MCF 10A (cell line): ENCODE measurements at regions of chr6 and their contacts with region 1.

Region 1: GRCh38 chr6:19538077-19538512 is 299.1 kb upstream of the ID4 start:
- DNase-seq: peak; percentile 91
- H3K4me3 Mint-ChIP-seq: no peak overlapping the region
- H3K27ac Mint-ChIP-seq: no peak overlapping the region
- H3K4me1 Mint-ChIP-seq: peaks cover 17% of the 10 kb centered on the region
- H3K27me3 Mint-ChIP-seq: no peaks in the 10 kb centered on the region
- CTCF ChIP-seq: no peak

Region 2: DNA sequence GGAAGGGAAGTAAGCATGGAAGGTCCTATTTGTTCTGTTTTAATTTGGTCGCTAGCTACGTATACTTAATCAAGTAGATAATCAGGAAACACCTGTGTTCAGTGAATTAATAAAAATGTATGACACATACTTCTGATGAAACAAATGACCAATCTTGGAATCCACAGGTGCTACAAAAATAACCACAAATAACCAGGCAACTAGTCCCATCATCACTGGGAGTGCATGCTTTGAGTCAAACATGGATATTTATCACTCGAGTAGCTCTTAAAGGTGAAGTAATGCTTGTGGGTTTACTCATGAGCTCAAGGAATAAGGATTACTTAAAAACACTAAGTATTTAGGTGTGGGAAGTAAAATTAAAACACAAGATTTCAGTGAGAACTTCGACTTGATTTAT is 13.5 kb after region 1 on chr6:
- CTCF ChIA-PET with region 1: interaction called, 7 read pairs
- POLR2A ChIA-PET with region 1: interaction called, 10 read pairs
- intact Hi-C with region 1: no loop called
- DNase-seq: peak; percentile 13
- H3K4me3 Mint-ChIP-seq: no peak overlapping the region
- H3K27ac Mint-ChIP-seq: no peak overlapping the region
- H3K4me1 Mint-ChIP-seq: no peaks in the 10 kb centered on the region
- H3K27me3 Mint-ChIP-seq: no peaks in the 10 kb centered on the region
- CTCF ChIP-seq: no peak